Aorta (tissue), 5 donors: ENCODE measurements at regions of chr11 and their contacts with region 1.

Region 1: DNA sequence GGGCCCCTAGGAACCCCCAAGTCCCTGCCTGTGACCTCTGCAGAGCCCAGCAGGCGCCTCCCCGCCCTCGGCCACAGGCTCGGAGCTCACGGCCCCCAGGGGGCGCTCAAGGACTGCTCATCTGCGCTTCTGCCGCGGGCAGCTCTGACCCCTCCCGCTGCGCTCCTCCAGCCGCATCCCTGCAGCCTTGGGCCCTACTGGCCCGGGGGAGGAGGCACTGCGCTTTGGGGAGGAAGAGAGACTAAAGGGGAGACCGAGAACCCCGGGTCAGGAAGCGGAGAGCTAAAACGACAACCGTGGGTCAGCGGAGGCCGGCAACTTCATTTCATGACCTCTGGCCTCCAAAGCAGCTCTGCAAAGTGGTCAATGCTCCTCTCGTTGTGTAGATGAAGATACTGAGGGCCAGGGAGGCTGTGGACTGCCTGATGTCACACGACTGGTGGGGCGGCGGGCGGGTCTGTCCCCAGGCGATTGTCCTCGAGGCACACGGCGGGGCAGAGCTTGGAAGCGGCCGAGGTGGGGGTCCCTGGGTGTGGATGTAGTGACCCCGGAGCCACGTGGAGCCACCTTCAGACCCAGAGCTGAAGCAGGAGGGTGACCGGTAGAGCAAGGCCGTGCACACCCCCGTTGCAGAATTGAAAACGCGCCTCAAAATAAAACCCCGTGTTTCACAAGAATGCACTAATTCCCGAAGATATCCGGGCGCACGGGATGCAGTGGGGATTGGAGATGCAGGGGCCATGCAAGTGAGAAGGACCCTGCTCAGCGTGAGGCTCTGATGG is 2.7 kb upstream of the KRTAP5-6 start:
- DNase-seq: peak; percentile 92 to 98
- ATAC-seq: peak; percentile 97
- H3K4me3 ChIP-seq: no peak overlapping the region
- H3K27ac ChIP-seq: no peak overlapping the region
- H3K4me1 ChIP-seq: no peaks in the 10 kb centered on the region
- H3K27me3 ChIP-seq: no peaks in the 10 kb centered on the region

Region 2: DNA sequence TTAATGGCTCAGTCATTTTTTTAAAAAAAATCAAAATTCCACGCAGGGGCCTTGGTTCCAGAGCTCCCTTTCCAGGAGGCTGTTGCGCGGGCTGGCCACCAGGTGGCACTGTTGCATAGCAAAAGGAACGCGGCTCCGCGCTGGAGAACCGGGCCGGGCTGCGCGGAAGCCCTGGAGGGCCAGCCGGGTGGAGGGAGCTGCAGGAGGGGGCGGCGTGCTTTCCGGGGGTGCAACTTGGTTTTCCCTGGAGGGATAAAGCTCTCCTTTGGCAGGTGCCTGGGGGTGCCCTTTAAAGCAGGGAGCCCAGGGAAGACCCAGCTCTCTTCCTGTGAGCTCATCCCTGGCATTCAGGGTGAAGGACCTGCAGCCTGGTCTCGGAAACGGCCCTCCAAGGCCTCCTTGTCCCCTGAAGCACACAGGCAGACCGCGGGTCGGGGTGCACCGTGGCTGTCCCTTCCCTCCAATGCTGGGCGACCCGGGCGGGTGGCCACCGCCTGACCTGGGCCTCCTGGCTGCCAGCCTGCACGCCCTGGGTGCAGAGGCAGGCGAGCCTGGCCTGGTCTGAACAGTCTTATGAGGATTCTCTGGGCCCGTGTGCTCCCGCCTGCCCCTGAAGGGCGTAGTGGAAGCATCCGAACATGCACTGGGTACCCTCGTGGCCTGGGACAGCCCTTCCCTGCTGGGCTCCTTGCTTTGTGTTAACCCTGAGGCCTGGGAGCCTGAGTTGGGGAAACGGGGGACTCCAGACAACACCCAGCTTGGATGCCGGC is 41.3 kb before region 1 on chr11:
- intact Hi-C with region 1: loop called in 1 of 2 experiments (anchors 2 kb)
- DNase-seq: peak; percentile 78 to 94
- ATAC-seq: peak; percentile 92
- H3K4me3 ChIP-seq: no peak overlapping the region
- H3K27ac ChIP-seq: no peak overlapping the region
- H3K4me1 ChIP-seq: no peaks in the 10 kb centered on the region
- H3K27me3 ChIP-seq: no peaks in the 10 kb centered on the region

Region 3: DNA sequence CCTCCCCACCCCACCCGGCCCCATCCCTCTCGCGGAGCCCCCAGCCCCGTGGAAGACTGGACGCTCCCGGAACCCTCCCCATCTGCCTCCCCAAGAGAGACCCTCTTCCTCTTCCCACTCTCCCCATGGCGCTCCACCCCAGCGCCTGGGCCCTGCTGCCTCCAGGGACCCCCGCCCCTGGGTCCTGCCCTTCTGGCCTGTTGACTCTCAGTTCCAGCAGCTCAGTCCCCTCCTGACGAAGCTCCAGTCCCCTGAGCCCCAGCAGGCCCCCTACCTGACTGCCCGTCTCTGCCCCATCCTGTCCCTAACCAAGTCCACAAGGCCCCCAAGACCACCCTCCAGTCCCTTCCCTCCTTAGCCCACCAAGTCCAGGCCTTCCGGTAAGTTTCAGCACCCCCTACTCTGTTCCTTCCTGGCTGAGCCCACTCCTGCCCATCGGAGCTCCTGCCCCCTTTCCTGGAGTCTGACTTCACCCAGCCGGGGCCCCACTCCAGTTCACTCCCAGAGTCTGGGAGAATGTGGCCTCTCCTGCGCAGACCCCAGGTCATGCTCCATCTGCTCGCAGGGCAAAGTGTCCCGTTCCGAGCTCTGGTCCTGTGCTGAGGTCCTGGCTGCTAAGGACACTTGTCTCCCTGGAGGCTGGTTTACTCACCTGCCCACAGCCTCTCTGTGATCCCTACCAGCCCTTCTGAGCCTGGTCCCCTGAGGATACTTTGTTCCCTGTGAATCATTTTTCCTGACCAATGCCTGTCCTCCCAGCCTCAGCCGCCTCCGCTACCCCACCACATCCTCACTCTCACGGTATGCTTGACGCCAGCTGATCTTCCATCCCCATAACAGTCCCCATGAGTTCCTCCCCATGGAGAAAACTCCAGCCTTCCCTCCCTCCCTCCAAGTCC is 55.4 kb after region 1 on chr11:
- intact Hi-C with region 1: loop called in 1 of 2 experiments (anchors 5 kb)
- DNase-seq: peak; percentile 80 to 83
- ATAC-seq: no peak
- H3K4me3 ChIP-seq: peak overlapping the region; percentile 56 to 59
- H3K27ac ChIP-seq: peak overlapping the region; percentile 54 to 86
- H3K4me1 ChIP-seq: no peaks in the 10 kb centered on the region
- H3K27me3 ChIP-seq: no peaks in the 10 kb centered on the region

Region 4: DNA sequence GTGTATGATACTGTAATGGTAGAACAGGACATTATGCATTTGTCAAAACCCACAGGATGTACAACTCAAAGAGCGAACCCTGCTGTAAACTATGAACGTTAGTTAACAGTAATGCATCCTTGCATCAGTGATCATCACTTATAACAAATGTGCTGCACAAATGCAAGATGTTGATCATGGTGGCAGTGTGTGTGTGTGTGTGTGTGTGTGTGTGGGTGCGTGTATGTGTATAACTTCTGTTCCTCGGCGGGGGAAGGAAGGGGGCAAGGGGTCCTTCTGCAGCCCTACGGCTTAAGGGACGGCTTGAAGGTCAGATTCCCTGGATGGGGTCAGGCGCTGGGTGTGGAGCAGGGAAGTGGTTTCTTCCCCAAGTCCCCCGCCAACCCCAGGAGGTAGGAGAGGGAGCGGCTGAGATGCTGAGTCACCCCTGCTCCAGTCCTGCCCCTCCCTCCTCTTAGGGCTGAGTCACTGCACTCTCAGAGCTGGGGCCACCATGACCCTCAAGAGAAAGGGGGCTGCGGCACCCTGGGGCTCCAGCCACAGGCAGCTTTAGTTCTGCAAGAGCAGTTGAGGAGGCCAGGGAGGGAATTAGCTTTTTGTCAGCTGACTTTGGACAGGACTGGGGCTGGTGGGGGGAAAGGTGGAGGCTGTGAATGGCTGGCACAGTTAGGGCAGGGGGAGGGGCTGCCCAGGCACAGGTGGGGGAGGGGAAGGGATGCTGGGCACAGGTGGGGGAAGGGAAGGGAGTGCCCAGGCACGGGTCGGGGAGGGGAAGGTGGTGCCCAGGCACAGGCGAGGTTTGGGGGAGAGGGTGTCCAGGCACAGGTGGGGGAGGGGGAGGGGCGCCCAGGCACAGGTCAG is 78.2 kb after region 1 on chr11:
- intact Hi-C with region 1: no loop called
- DNase-seq: peak; percentile 87 to 88
- ATAC-seq: peak; percentile 87
- H3K4me3 ChIP-seq: no peak overlapping the region
- H3K27ac ChIP-seq: no peak overlapping the region
- H3K4me1 ChIP-seq: no peaks in the 10 kb centered on the region
- H3K27me3 ChIP-seq: no peaks in the 10 kb centered on the region

Region 5: GRCh38 chr11:1832211-1832919 is 138.1 kb after region 1 on chr11:
- intact Hi-C with region 1: loop called (anchors 1 kb)
- DNase-seq: peak; percentile 77 to 91
- ATAC-seq: peak; percentile 64
- H3K4me3 ChIP-seq: no peak overlapping the region
- H3K27ac ChIP-seq: no peak overlapping the region
- H3K4me1 ChIP-seq: no peaks in the 10 kb centered on the region
- H3K27me3 ChIP-seq: no peaks in the 10 kb centered on the region

Region 6: GRCh38 chr11:2151500-2152257 is 457.4 kb after region 1 on chr11:
- intact Hi-C with region 1: loop called (anchors 2 to 5 kb)
- DNase-seq: peak; percentile 79 to 90
- ATAC-seq: peak; percentile 80
- H3K4me3 ChIP-seq: no peak overlapping the region
- H3K27ac ChIP-seq: no peak overlapping the region
- H3K4me1 ChIP-seq: no peaks in the 10 kb centered on the region
- H3K27me3 ChIP-seq: no peaks in the 10 kb centered on the region